Activated naive CD4-positive, alpha-beta T cell treated with anti-CD3 and anti-CD28 coated beads for 36 hours (primary cell): ENCODE measurements at regions of chr6 and their contacts with region 1.

Region 1: GRCh38 chr6:157885211-157885788 is 62.3 kb downstream of the SNX9 start:
- DNase-seq: peak; percentile 88
- H3K4me3 Mint-ChIP-seq: peak overlapping the region; percentile 50
- H3K27ac Mint-ChIP-seq: peak overlapping the region; percentile 97
- H3K4me1 Mint-ChIP-seq: peaks cover 79% of the 10 kb centered on the region
- H3K27me3 Mint-ChIP-seq: no peaks in the 10 kb centered on the region

Region 2: GRCh38 chr6:157428427-157429202 is 456.7 kb before region 1 on chr6:
- CTCF ChIA-PET with region 1: no interaction called
- intact Hi-C with region 1: loop called (anchors 1 kb)
- DNase-seq: peak; percentile 94
- H3K4me3 Mint-ChIP-seq: peak overlapping the region; percentile 43
- H3K27ac Mint-ChIP-seq: peak overlapping the region; percentile 90
- H3K4me1 Mint-ChIP-seq: peaks cover 43% of the 10 kb centered on the region
- H3K27me3 Mint-ChIP-seq: no peaks in the 10 kb centered on the region

Region 3: GRCh38 chr6:157527471-157527907 is 357.8 kb before region 1 on chr6:
- CTCF ChIA-PET with region 1: no interaction called
- intact Hi-C with region 1: no loop called
- DNase-seq: no peak
- H3K4me3 Mint-ChIP-seq: no peak overlapping the region
- H3K27ac Mint-ChIP-seq: no peak overlapping the region
- H3K4me1 Mint-ChIP-seq: peaks cover 12% of the 10 kb centered on the region
- H3K27me3 Mint-ChIP-seq: no peaks in the 10 kb centered on the region

Region 4: GRCh38 chr6:157800420-157801237 is 84.7 kb before region 1 on chr6:
- CTCF ChIA-PET with region 1: no interaction called
- intact Hi-C with region 1: loop called (anchors 1 kb)
- DNase-seq: peak; percentile 69
- H3K4me3 Mint-ChIP-seq: peak overlapping the region; percentile 6
- H3K27ac Mint-ChIP-seq: peak overlapping the region; percentile 73
- H3K4me1 Mint-ChIP-seq: peaks cover 70% of the 10 kb centered on the region
- H3K27me3 Mint-ChIP-seq: no peaks in the 10 kb centered on the region

Region 5: DNA sequence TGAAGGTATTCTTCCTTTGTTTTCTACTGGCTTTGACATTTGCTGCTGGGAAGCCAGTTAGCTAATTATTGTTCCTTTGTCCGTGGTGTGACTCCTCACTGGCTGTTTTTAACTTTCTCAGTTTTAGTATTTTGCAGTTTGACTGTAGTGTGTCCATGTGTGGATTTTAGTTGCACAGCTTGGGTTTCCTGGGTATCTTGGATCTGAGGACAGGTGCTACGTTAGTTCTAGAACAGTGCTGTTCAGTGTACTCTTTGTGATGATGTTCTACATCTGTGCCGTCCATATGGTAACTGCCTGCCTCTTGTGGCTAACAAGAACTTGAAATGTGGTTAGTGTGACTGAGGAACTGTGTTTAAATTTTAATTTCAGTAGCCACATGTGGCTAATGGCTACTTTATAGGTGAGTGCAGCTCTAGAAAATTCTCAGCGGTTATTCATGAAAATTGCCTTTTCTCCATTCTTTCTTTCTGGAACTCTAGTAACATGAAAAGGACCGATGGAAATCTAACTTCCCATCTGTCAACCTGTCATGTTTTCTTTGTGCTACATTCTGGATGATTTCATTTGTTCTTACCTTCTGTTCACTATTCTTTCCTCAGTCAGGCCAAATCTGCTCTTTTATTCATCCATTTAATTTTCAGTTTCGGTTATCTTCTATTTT is 54.8 kb before region 1 on chr6:
- CTCF ChIA-PET with region 1: interaction called, 3 read pairs
- intact Hi-C with region 1: loop called (anchors 2 kb)
- DNase-seq: no peak
- H3K4me3 Mint-ChIP-seq: peak overlapping the region; percentile 34
- H3K27ac Mint-ChIP-seq: peak overlapping the region; percentile 54
- H3K4me1 Mint-ChIP-seq: peaks cover 71% of the 10 kb centered on the region
- H3K27me3 Mint-ChIP-seq: no peaks in the 10 kb centered on the region

Region 6: GRCh38 chr6:157873735-157874344 is 11.5 kb before region 1 on chr6:
- CTCF ChIA-PET with region 1: interaction called, 16 read pairs
- intact Hi-C with region 1: no loop called
- DNase-seq: peak; percentile 96
- H3K4me3 Mint-ChIP-seq: no peak overlapping the region
- H3K27ac Mint-ChIP-seq: peak overlapping the region; percentile 67
- H3K4me1 Mint-ChIP-seq: peaks cover 46% of the 10 kb centered on the region
- H3K27me3 Mint-ChIP-seq: no peaks in the 10 kb centered on the region

Region 7: GRCh38 chr6:158057213-158057987 is 172.1 kb after region 1 on chr6:
- CTCF ChIA-PET with region 1: interaction called, 3 read pairs
- intact Hi-C with region 1: loop called (anchors 2 kb)
- DNase-seq: peak; percentile 77
- H3K4me3 Mint-ChIP-seq: no peak overlapping the region
- H3K27ac Mint-ChIP-seq: peak overlapping the region; percentile 25
- H3K4me1 Mint-ChIP-seq: peaks cover 54% of the 10 kb centered on the region
- H3K27me3 Mint-ChIP-seq: no peaks in the 10 kb centered on the region